Activated CD4-positive, alpha-beta memory T cell treated with anti-CD3 and anti-CD28 coated beads, Interleukin-2, amount 10 ng/mL, durations not matched to agents 7 days and 5 days (primary cell): ENCODE measurements at regions of chr17 and their contacts with region 1.

Region 1: DNA sequence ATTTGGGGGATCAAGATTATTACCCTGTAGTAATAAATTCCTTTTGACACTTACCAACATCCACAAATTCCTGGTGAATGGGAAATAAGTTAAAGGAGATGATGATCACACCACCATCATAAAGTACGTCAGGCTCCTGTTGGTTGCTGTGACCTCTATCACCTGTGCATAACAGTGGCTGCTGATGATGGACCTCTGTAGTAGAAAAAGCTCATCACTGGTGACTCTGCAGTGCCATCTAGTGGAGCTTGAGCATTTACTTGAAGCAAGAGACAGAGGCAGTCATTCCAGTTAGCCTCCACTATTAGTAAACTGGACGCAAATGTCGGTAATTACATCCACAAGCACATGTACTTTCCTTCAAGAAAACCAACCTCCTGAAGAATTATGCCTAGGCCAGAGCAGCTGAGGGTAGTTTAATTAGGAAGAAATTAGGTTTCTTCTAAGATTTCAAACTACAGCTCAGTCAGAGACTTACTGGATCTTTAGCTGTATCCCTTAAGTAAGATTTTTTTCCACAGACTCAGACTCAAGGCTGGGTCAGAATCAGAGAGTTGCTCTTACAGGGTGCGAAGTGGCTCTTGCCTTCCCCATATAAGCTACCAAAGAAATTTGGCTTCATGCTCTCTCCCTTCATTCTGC is 39.3 kb downstream of the CYB561 start:
- DNase-seq: peak; percentile 72
- H3K4me3 Mint-ChIP-seq: no peak overlapping the region
- H3K27ac Mint-ChIP-seq: no peak overlapping the region
- H3K4me1 Mint-ChIP-seq: peaks cover 6% of the 10 kb centered on the region
- H3K27me3 Mint-ChIP-seq: no peaks in the 10 kb centered on the region

Region 2: DNA sequence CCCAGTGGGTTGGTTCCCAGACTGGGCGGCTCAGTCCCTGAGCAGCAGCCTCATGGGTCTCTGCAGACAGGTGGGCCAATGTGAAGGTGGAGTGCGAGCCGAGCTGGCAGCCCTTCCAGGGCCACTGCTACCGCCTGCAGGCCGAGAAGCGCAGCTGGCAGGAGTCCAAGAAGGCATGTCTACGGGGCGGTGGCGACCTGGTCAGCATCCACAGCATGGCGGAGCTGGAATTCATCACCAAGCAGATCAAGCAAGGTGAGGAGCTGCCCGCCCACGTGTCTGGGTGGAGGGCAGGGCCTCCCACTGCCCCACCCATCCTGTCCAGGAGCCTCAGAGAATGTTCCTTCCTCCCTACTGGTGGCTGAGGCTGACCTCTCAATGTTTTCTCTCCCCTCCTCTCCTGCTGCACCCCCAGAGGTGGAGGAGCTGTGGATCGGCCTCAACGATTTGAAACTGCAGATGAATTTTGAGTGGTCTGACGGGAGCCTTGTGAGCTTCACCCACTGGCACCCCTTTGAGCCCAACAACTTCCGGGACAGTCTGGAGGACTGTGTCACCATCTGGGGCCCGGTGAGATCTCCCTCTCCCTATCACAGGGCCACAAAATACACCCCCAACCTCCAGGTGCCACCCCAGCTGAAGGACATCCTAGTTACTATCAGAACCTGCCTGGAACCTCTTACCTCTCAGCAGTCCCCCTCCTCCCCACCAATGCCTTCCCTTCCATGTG is 735.1 kb before region 1 on chr17:
- CTCF ChIA-PET with region 1: interaction called, 14 read pairs
- POLR2A ChIA-PET with region 1: interaction called, 3 read pairs
- DNase-seq: no peak
- H3K4me3 Mint-ChIP-seq: no peak overlapping the region
- H3K27ac Mint-ChIP-seq: no peak overlapping the region
- H3K4me1 Mint-ChIP-seq: peaks cover 5% of the 10 kb centered on the region
- H3K27me3 Mint-ChIP-seq: no peaks in the 10 kb centered on the region

Region 3: GRCh38 chr17:62995377-62995885 is 411.4 kb before region 1 on chr17:
- CTCF ChIA-PET with region 1: interaction called, 14 read pairs
- POLR2A ChIA-PET with region 1: no interaction called
- DNase-seq: no peak
- H3K4me3 Mint-ChIP-seq: no peak overlapping the region
- H3K27ac Mint-ChIP-seq: no peak overlapping the region
- H3K4me1 Mint-ChIP-seq: peaks cover 2% of the 10 kb centered on the region
- H3K27me3 Mint-ChIP-seq: no peaks in the 10 kb centered on the region

Region 4: GRCh38 chr17:63082273-63082993 is 324.4 kb before region 1 on chr17:
- CTCF ChIA-PET with region 1: interaction called, 26 read pairs
- POLR2A ChIA-PET with region 1: no interaction called
- DNase-seq: no peak
- H3K4me3 Mint-ChIP-seq: no peak overlapping the region
- H3K27ac Mint-ChIP-seq: no peak overlapping the region
- H3K4me1 Mint-ChIP-seq: no peaks in the 10 kb centered on the region
- H3K27me3 Mint-ChIP-seq: no peaks in the 10 kb centered on the region

Region 5: GRCh38 chr17:63419949-63420867 is 13.4 kb after region 1 on chr17:
- CTCF ChIA-PET with region 1: interaction called, 36 read pairs
- POLR2A ChIA-PET with region 1: no interaction called
- DNase-seq: peak; percentile 77
- H3K4me3 Mint-ChIP-seq: peak overlapping the region; percentile 38
- H3K27ac Mint-ChIP-seq: peak overlapping the region; percentile 79
- H3K4me1 Mint-ChIP-seq: peaks cover 20% of the 10 kb centered on the region
- H3K27me3 Mint-ChIP-seq: no peaks in the 10 kb centered on the region

Region 6: GRCh38 chr17:63434876-63435684 is 28.3 kb after region 1 on chr17:
- CTCF ChIA-PET with region 1: interaction called, 11 read pairs
- POLR2A ChIA-PET with region 1: no interaction called
- DNase-seq: peak; percentile 82
- H3K4me3 Mint-ChIP-seq: peak overlapping the region; percentile 44
- H3K27ac Mint-ChIP-seq: peak overlapping the region; percentile 84
- H3K4me1 Mint-ChIP-seq: peaks cover 68% of the 10 kb centered on the region
- H3K27me3 Mint-ChIP-seq: no peaks in the 10 kb centered on the region

Region 7: DNA sequence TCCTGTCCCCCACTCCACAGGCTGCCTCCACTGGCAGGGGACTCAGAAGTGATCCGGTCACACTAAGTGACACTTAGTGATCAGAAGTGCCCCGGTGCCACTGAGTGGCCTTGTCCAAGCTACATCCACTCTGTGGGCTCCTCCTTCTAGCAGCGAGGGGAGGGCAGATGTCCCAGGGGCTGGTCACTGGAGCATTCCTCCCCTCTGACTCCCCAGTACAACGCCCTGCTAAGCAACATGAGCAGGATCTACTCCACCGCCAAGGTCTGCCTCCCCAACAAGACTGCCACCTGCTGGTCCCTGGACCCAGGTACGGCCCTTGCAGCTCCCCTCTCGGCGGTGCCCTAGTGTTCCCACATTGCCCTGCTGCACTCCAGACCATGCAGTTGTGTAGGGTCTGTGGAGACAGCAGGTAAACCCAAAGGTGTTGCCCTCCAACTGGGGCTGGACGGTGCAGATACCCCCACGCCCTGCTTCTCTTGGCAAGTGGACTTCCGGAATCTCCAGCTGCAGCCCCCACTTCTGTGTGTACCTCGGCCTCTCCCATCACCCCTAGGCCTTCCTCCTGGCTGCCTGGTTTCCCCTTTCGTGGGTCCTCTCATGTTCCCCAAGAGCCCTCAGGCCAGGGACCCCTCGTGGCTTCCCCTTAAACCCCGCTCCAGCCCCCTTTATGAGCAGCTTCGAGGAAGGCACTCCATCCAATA is 72.1 kb after region 1 on chr17:
- CTCF ChIA-PET with region 1: interaction called, 16 read pairs
- POLR2A ChIA-PET with region 1: no interaction called
- DNase-seq: peak; percentile 84
- H3K4me3 Mint-ChIP-seq: peak overlapping the region; percentile 74
- H3K27ac Mint-ChIP-seq: no peak overlapping the region
- H3K4me1 Mint-ChIP-seq: peaks cover 16% of the 10 kb centered on the region
- H3K27me3 Mint-ChIP-seq: peaks cover 33% of the 10 kb centered on the region